ENCODE measurements at regions of chr1 and their contacts with region 1.

Region 1: DNA sequence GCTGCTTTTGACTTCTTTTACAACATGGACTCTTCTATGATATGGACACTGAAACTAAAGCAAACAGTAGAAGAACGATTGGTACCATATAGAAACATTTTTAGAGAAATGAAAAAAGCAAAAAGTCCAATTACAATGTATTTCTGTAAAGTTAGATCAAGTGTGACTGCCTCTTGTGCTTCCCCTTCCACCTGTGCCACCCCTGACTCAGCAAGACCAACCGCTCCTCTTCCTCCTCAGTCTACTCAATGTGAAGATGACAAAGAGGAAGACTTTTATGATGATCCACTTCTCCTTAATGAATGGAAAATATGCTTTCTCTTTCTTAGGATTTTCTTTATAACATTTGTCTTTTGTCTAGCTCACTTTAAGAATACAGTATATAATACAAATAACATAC is 66.9 kb downstream of the PHTF1 start:
- DNase-seq: no peak
- ATAC-seq: no peak

Region 2: DNA sequence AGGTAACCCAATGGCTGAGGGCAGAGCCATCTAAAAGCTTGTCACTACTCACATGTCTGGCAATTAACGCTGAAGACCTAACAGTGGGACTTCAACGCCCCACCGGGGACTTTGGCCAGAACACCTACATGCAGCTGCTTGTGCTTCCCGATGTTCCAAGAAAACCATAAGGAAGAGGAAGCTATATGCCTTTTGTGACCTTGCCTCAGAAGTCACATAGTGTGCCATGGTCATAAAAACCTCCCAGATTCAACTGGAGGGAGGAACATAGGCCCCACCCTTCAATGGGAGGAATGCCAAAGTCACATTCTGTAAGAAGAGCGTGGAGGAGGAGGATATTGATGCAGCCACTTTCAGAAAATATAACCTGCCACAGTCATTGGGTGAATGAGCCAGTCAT is 449.9 kb before region 1 on chr1:
- intact Hi-C with region 1: loop called (anchors 5 kb)
- DNase-seq: no peak
- ATAC-seq: no peak

Region 3: GRCh38 chr1:115400891-115401290 is 1708.5 kb after region 1 on chr1:
- intact Hi-C with region 1: no loop called
- DNase-seq: no peak
- ATAC-seq: no peak

Measured in sciatic nerve (tissue), 2 donors.